CD8-positive, alpha-beta T cell (primary cell): ENCODE measurements at regions of chr14 and their contacts with region 1.

Region 1: GRCh38 chr14:20613094-20614037 is 22.2 kb upstream of the RNASE12 start:
- DNase-seq: peak; percentile 66 to 95 (median 80)
- ATAC-seq: peak; percentile 84
- H3K4me3 ChIP-seq: peak overlapping the region; percentile 57
- H3K4me3 Mint-ChIP-seq: no peak overlapping the region
- H3K27ac ChIP-seq: peak overlapping the region in 1 of 2 experiments; percentile 42
- H3K27ac Mint-ChIP-seq: no peak overlapping the region
- H3K4me1 ChIP-seq: peaks cover 20% of the 10 kb centered on the region
- H3K4me1 Mint-ChIP-seq: peaks cover 7% of the 10 kb centered on the region
- H3K27me3 ChIP-seq: no peaks in the 10 kb centered on the region
- H3K27me3 Mint-ChIP-seq: peaks cover 2% of the 10 kb centered on the region
- CTCF ChIP-seq: peak; percentile 60

Region 2: GRCh38 chr14:20332788-20333493 is 280.4 kb before region 1 on chr14 and contains the start of gene CCNB1IP1:
- CTCF ChIA-PET with region 1: interaction called, 103 read pairs
- POLR2A ChIA-PET with region 1: no interaction called
- intact Hi-C with region 1: no loop called
- DNase-seq: peak in 8 of 9 experiments; percentile 20 to 91 (median 50)
- ATAC-seq: peak; percentile 98
- H3K4me3 ChIP-seq: peak within 1 kb of the TSS; percentile 56 to 72
- H3K4me3 Mint-ChIP-seq: peak within 1 kb of the TSS; percentile 93
- H3K27ac ChIP-seq: peak within 1 kb of the TSS; percentile 49 to 73
- H3K27ac Mint-ChIP-seq: peak within 1 kb of the TSS; percentile 88
- H3K4me1 ChIP-seq: peaks cover 7% of the 10 kb centered on the region
- H3K4me1 Mint-ChIP-seq: peaks cover 30% of the 10 kb centered on the region
- H3K27me3 ChIP-seq: no peaks in the 10 kb centered on the region
- H3K27me3 Mint-ChIP-seq: no peaks in the 10 kb centered on the region
- CTCF ChIP-seq: no peak
- total RNA-seq, gene CCNB1IP1: 26.9 to 28.0 TPM

Region 3: GRCh38 chr14:20454516-20455354 is 158.6 kb before region 1 on chr14 and contains the starts of genes APEX1 and OSGEP:
- CTCF ChIA-PET with region 1: interaction called, 3 read pairs
- POLR2A ChIA-PET with region 1: interaction called, 9 read pairs
- intact Hi-C with region 1: loop called in 1 of 2 experiments (anchors 1 kb)
- DNase-seq: peak; percentile 96 to 100 (median 97)
- ATAC-seq: peak; percentile 80
- H3K4me3 ChIP-seq: peak within 1 kb of the TSS; percentile 73 to 82
- H3K4me3 Mint-ChIP-seq: no peak within 1 kb of the TSS
- H3K27ac ChIP-seq: peak within 1 kb of the TSS; percentile 89 to 96
- H3K27ac Mint-ChIP-seq: no peak within 1 kb of the TSS
- H3K4me1 ChIP-seq: peaks cover 32% of the 10 kb centered on the region
- H3K4me1 Mint-ChIP-seq: peaks cover 22% of the 10 kb centered on the region
- H3K27me3 ChIP-seq: no peaks in the 10 kb centered on the region
- H3K27me3 Mint-ChIP-seq: no peaks in the 10 kb centered on the region
- CTCF ChIP-seq: no peak
- total RNA-seq, gene APEX1: 120 to 123 TPM
- total RNA-seq, gene OSGEP: 40.7 to 47.4 TPM

Region 4: DNA sequence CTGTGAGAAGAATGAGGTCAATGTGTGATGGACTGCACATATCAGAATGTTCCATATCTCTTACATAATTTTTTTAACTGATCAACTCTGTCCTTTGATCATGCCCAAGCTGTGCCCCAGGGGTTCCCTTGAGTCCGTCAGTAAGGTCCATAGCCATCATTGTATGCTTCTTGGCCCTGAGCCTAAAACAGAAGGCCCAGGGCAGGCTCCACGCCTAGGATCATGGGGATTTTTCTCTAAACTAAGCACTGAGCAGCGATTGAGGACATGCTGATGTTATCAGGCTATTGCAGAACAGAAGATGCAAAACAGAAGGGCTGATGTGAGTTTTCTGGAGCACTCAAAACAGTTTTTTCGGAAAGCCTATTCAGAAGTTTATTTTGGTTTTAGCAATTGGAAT is 73.5 kb before region 1 on chr14:
- CTCF ChIA-PET with region 1: no interaction called
- POLR2A ChIA-PET with region 1: no interaction called
- intact Hi-C with region 1: no loop called
- DNase-seq: no peak
- ATAC-seq: no peak
- H3K4me3 ChIP-seq: no peak overlapping the region
- H3K4me3 Mint-ChIP-seq: no peak overlapping the region
- H3K27ac ChIP-seq: no peak overlapping the region
- H3K27ac Mint-ChIP-seq: no peak overlapping the region
- H3K4me1 ChIP-seq: no peaks in the 10 kb centered on the region
- H3K4me1 Mint-ChIP-seq: no peaks in the 10 kb centered on the region
- H3K27me3 ChIP-seq: no peaks in the 10 kb centered on the region
- H3K27me3 Mint-ChIP-seq: peaks cover 2% of the 10 kb centered on the region
- CTCF ChIP-seq: no peak

Region 5: DNA sequence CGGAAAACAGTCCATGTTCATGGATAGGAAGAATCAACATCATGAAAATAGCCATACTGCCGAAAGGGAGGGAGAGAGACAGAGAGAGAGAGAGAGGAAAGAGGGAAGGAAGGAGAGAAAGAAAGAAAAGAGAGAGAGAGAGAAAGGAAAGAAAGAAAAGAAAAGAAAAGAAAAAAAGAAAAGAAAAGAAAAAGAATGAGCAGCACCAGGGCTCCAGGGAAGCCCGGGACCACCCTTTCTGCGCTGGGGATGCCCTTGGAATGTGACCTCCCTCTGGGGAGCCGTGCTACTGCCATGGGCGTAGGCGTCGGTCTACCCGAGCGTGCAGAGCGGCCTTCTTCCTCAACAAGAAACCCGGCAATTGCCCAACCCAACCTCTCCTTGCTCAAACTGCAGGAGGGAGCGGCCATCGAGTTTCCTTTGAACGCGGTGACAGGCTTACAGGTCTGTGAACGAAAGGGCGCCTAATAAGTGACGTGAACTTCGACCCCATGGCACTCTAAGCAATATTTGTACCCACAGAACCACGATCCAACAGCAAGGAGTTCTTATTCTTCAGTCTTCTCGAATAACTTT is 11.2 kb after region 1 on chr14:
- CTCF ChIA-PET with region 1: interaction called, 13 read pairs
- POLR2A ChIA-PET with region 1: interaction called, 9 read pairs
- intact Hi-C with region 1: loop called (anchors 1 kb)
- DNase-seq: peak in 6 of 9 experiments; percentile 39 to 77 (median 60)
- ATAC-seq: peak; percentile 54
- H3K4me3 ChIP-seq: peak overlapping the region; percentile 45 to 50
- H3K4me3 Mint-ChIP-seq: peak overlapping the region; percentile 85
- H3K27ac ChIP-seq: peak overlapping the region in 1 of 2 experiments; percentile 15
- H3K27ac Mint-ChIP-seq: peak overlapping the region; percentile 47
- H3K4me1 ChIP-seq: peaks cover 39% of the 10 kb centered on the region
- H3K4me1 Mint-ChIP-seq: peaks cover 61% of the 10 kb centered on the region
- H3K27me3 ChIP-seq: peaks cover 0 to 3% of the 10 kb centered on the region in 2 experiments
- H3K27me3 Mint-ChIP-seq: peaks cover 18% of the 10 kb centered on the region
- CTCF ChIP-seq: no peak

Region 6: DNA sequence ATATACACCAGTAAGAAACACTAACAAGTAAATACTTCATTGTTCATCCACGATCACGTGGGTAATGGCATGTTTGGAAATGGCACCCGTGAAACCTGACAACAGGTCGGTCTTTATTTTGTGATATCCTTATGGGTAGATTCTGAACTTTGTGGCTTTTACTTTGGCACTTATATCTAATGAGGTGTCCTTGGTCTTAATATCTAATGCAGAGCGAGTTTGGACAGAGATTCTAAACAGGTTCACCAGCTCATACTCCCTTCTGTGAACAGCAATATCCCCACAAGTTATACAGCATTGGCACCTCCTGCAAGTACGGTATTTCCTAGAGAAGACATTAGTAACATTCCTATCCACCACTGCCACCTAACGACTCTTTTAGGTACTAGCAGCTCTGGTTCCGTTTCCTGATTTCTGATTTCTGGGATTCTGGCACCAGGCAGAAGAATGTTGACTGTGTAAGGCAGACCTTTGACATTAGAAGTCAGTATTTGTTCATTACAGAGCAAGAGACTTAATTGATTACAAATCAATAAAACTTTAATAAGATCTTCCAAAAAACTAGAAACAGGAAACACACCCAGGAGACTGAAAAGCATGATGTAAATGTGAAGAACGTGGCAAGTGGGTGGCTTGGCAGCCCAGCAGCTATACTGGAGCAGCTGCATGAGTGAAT is 77.6 kb after region 1 on chr14:
- CTCF ChIA-PET with region 1: interaction called, 61 read pairs
- POLR2A ChIA-PET with region 1: interaction called, 4 read pairs
- intact Hi-C with region 1: loop called (anchors 1 kb)
- DNase-seq: peak in 8 of 9 experiments; percentile 4 to 83 (median 38)
- ATAC-seq: peak; percentile 99
- H3K4me3 ChIP-seq: no peak overlapping the region
- H3K4me3 Mint-ChIP-seq: no peak overlapping the region
- H3K27ac ChIP-seq: no peak overlapping the region
- H3K27ac Mint-ChIP-seq: no peak overlapping the region
- H3K4me1 ChIP-seq: no peaks in the 10 kb centered on the region
- H3K4me1 Mint-ChIP-seq: peaks cover 3% of the 10 kb centered on the region
- H3K27me3 ChIP-seq: no peaks in the 10 kb centered on the region
- H3K27me3 Mint-ChIP-seq: no peaks in the 10 kb centered on the region
- CTCF ChIP-seq: peak; percentile 98